Posterior cingulate gyrus (tissue), 11 donors: ENCODE measurements at regions of chr7 and their contacts with region 1.

Region 1: GRCh38 chr7:99438573-99439480 is at the starts of genes CPSF4 and PTCD1:
- DNase-seq: peak; percentile 92 to 99 (median 97)

Region 2: GRCh38 chr7:99408379-99409191 is 30.2 kb before region 1 on chr7 and contains the starts of genes BUD31 and PDAP1:
- intact Hi-C with region 1: loop called (anchors 1 kb)
- DNase-seq: peak; percentile 86 to 99 (median 90)

Region 3: DNA sequence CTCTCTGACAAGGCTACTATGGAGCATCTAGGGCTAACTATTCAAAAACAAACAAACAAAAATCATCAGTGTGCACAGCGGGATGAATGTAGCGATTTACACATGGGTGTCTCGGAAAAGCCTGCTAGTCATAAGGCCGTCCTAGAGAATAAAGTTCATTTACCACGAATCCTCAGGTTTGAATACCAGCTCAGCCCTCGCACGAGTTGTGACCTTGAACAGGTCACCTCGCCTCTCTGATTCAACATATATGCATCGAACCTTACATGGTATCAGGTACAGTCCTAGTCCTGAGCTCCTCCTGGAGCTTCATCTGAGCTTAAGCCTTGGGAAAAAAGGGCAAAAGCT is 26.6 kb after region 1 on chr7:
- intact Hi-C with region 1: loop called (anchors 1 kb)
- DNase-seq: peak in 1 of 10 donors; percentile 33

Region 4: DNA sequence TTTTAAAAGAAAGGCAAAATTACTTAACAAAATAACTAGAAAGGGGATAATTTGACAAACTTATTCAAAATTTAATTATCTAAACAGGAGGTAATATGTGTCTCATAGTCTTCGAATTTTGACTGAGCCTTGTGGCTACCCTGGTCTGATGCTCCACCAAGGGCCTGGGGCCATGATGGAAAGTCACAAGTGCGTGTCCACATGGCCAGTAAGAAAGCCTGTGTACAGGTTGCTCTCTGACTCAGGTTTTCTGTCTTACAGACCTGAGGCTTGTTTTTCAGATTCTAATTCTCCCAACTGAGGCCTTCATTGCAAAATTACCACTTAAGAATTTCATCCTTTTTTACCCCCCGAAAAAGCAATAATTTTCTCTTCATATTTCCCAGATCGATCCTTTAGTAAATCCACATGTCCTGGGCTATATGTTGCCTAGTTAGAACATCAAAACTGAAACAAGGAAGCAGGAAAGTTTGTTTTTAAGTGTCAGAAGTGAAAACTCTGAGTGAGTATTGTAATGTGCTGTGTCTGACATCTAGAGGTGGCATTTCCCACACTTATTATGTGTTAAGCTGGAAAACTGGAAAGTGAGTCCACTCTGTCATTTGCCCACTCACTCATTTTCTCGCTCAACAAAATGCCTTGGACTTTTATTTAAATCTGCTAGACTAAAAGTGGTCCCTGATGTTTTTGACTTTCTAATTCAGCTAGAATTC is 399.0 kb after region 1 on chr7:
- intact Hi-C with region 1: no loop called
- DNase-seq: no peak